Cardiac septum (tissue), 1 donor: ENCODE measurements at regions of chr5 and their contacts with region 1.

Region 1: GRCh38 chr5:58246461-58246944 is 213.4 kb downstream of the PLK2 start:
- DNase-seq: no peak

Region 2: GRCh38 chr5:58071566-58071965 is 174.9 kb before region 1 on chr5:
- intact Hi-C with region 1: loop called (anchors 5 kb)
- DNase-seq: peak; percentile 88

Region 3: GRCh38 chr5:58273711-58274110 is 27.2 kb after region 1 on chr5:
- intact Hi-C with region 1: loop called (anchors 1 kb)
- DNase-seq: no peak

Region 4: DNA sequence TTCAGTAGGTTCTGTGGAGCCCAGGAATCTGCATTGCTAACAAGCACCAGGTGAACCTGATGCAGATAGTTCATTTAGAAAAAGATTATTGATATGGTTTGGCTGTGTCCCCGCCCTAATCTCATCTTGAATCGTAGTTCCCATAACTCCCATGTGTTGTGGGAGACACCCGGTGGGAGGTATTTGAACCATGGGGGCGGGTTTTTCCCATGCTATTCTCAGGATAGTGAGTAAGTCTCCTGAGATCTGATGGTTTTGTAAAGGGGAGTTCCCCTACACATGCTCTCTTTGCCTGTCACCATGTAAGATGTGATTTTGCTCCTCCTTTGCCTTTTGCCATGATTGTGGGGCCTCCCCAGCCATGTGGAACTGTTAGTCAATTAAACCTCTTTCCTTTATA is 548.4 kb after region 1 on chr5:
- intact Hi-C with region 1: no loop called
- DNase-seq: no peak